GM12878 (cell line): ENCODE measurements at regions of chr12 and their contacts with region 1.

Region 1: GRCh38 chr12:64610149-64610678 is at the start of gene RASSF3:
- DNase-seq: no peak
- ATAC-seq: peak; percentile 54
- H3K4me3 ChIP-seq: peak within 1 kb of the TSS; percentile 99
- H3K27ac ChIP-seq: peak within 1 kb of the TSS; percentile 83
- H3K4me1 ChIP-seq: peaks cover 17% of the 10 kb centered on the region; the same call in 1 of the 2 replicates
- H3K27me3 ChIP-seq: no peaks in the 10 kb centered on the region
- CTCF ChIP-seq: no peak
- EP300 ChIP-seq: no peak
- POLR2A ChIP-seq: peak; percentile 74
- RAD21 ChIP-seq: no peak
- polyA plus RNA-seq, gene RASSF3: 9.0 to 11.2 TPM

Region 2: DNA sequence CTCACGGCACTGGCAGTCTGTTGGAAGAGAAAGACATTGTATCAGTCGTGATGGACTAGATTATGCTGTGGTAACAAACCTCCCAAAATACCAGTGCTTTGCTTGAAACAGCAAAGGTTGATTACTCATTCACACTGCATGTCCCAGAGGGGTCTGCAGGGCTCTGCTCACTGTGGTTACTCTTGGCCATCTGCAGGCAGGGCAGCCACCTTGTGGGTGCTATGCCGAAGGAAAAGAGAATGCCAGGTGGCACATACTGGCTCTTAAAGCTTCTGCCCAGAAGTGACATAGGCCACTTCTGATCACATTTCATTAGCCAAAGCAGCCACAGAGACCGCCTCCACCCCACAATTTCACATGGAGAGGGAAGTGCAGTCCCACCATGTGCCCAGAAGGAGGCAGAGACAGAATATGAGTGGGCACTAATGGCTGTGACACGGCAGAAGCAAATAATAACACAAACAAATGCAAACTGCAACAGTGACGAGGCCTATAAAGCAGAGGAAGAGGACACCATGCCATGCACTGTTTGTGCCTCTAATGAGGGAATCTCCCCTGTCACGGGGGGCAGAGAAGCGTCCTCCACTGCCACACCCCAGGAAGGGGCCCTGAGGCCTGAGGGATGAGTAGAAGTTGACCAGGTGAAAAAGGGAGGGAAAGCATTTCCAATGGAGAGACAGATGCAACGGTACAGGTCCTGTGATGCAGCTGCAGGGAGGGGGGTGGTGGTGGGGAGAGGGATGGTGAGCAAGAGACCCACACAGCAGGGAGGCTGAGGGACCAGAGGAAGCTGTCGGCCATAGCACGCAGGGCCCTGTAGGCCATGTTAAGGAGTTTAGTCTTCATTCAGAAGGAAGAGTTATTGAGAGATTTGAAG is 336.4 kb before region 1 on chr12:
- CTCF ChIA-PET with region 1: no interaction called
- POLR2A ChIA-PET with region 1: no interaction called
- RAD21 ChIA-PET with region 1: no interaction called
- SMC1A ChIA-PET with region 1: no interaction called
- in situ Hi-C with region 1: no loop called
- intact Hi-C with region 1: no loop called
- DNase-seq: no peak
- ATAC-seq: peak; percentile 91
- H3K4me3 ChIP-seq: no peak overlapping the region
- H3K27ac ChIP-seq: no peak overlapping the region
- H3K4me1 ChIP-seq: no peaks in the 10 kb centered on the region
- H3K27me3 ChIP-seq: no peaks in the 10 kb centered on the region; a peak in 1 of 4 replicates
- CTCF ChIP-seq: peak; percentile 36 to 64 (median 51); a peak in 4 of 6 replicates
- EP300 ChIP-seq: no peak
- POLR2A ChIP-seq: no peak
- RAD21 ChIP-seq: peak; percentile 79

Region 3: GRCh38 chr12:64551698-64552097 is 58.5 kb before region 1 on chr12:
- CTCF ChIA-PET with region 1: interaction called, 26 read pairs
- POLR2A ChIA-PET with region 1: interaction called, 4 read pairs
- RAD21 ChIA-PET with region 1: interaction called, 9 read pairs
- SMC1A ChIA-PET with region 1: interaction called, 8 read pairs
- in situ Hi-C with region 1: no loop called
- intact Hi-C with region 1: loop called (anchors 2 kb)
- DNase-seq: no peak
- ATAC-seq: no peak
- H3K4me3 ChIP-seq: no peak overlapping the region
- H3K27ac ChIP-seq: no peak overlapping the region
- H3K4me1 ChIP-seq: no peaks in the 10 kb centered on the region; the same call in 1 of the 2 replicates
- H3K27me3 ChIP-seq: no peaks in the 10 kb centered on the region; a peak in 1 of 4 replicates
- CTCF ChIP-seq: no peak
- EP300 ChIP-seq: no peak
- POLR2A ChIP-seq: no peak
- RAD21 ChIP-seq: no peak

Region 4: GRCh38 chr12:64669270-64669842 is 59.1 kb after region 1 on chr12:
- CTCF ChIA-PET with region 1: interaction called, 7 read pairs
- POLR2A ChIA-PET with region 1: interaction called, 27 read pairs
- RAD21 ChIA-PET with region 1: interaction called, 19 read pairs
- SMC1A ChIA-PET with region 1: interaction called, 38 read pairs
- in situ Hi-C with region 1: no loop called
- intact Hi-C with region 1: loop called (anchors 5 kb)
- DNase-seq: peak; percentile 73
- ATAC-seq: peak; percentile 82
- H3K4me3 ChIP-seq: peak overlapping the region; percentile 74
- H3K27ac ChIP-seq: peak overlapping the region; percentile 91
- H3K4me1 ChIP-seq: peaks cover 77% of the 10 kb centered on the region
- H3K27me3 ChIP-seq: no peaks in the 10 kb centered on the region
- CTCF ChIP-seq: no peak
- EP300 ChIP-seq: no peak
- POLR2A ChIP-seq: peak; percentile 31; the same call in 1 of the 2 replicates
- RAD21 ChIP-seq: no peak

Region 5: GRCh38 chr12:64696080-64696741 is 86.0 kb after region 1 on chr12:
- CTCF ChIA-PET with region 1: interaction called, 37 read pairs
- POLR2A ChIA-PET with region 1: interaction called, 12 read pairs
- RAD21 ChIA-PET with region 1: interaction called, 27 read pairs
- SMC1A ChIA-PET with region 1: interaction called, 13 read pairs
- in situ Hi-C with region 1: no loop called
- intact Hi-C with region 1: loop called (anchors 2 kb)
- DNase-seq: no peak
- ATAC-seq: no peak
- H3K4me3 ChIP-seq: no peak overlapping the region
- H3K27ac ChIP-seq: no peak overlapping the region
- H3K4me1 ChIP-seq: 0 out of 2 replicates have a peak, but pooled peaks cover 3% of the 10 kb centered on the region
- H3K27me3 ChIP-seq: no peaks in the 10 kb centered on the region
- CTCF ChIP-seq: peak in 1 of 3 experiments; percentile 40; a peak in 2 of 6 replicates
- EP300 ChIP-seq: no peak
- POLR2A ChIP-seq: no peak
- RAD21 ChIP-seq: peak; percentile 45

Region 6: DNA sequence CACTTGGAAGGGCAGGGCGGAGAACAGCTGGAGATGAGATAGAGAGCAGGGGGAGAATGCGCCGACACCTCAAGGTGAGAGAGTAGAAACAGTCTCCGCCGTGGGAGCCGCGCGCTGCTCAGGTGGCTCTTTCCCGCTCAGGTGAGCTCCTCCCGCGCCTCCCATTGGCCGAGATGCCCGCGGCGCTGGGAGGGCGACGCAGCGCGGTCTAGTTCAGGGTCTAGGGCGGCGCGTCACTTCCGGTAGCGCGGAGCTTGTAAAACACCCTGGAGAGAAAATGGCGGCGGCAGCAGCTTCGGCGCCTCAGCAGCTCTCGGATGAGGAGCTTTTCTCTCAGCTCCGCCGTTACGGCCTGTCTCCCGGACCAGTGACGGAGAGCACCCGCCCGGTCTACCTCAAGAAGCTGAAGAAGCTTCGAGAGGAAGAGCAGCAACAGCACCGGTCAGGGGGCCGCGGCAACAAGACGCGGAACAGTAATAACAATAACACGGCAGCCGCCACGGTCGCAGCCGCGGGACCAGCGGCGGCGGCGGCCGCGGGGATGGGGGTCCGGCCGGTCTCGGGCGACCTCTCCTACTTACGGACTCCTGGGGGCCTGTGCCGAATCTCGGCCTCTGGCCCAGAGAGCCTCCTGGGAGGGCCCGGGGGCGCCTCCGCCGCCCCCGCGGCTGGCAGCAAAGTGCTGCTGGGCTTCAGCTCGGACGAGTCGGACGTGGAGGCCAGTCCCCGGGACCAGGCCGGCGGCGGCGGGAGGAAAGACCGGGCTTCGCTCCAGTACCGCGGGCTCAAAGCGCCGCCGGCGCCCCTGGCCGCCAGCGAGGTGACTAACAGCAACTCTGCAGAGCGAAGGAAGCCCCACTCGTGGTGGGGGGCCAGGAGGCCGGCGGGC is 559.4 kb after region 1 on chr12 and contains the start of gene LEMD3:
- CTCF ChIA-PET with region 1: no interaction called
- POLR2A ChIA-PET with region 1: interaction called, 4 read pairs
- RAD21 ChIA-PET with region 1: no interaction called
- SMC1A ChIA-PET with region 1: no interaction called
- in situ Hi-C with region 1: no loop called
- intact Hi-C with region 1: loop called (anchors 10 kb)
- DNase-seq: peak; percentile 59
- ATAC-seq: peak; percentile 90
- H3K4me3 ChIP-seq: peak within 1 kb of the TSS; percentile 86
- H3K27ac ChIP-seq: peak within 1 kb of the TSS; percentile 83
- H3K4me1 ChIP-seq: peaks cover 5% of the 10 kb centered on the region
- H3K27me3 ChIP-seq: no peaks in the 10 kb centered on the region
- CTCF ChIP-seq: no peak
- EP300 ChIP-seq: peak in 1 of 2 experiments; percentile 16; a peak in 1 of 4 replicates
- POLR2A ChIP-seq: peak; percentile 99
- RAD21 ChIP-seq: no peak
- polyA plus RNA-seq, gene LEMD3: 7.5 to 9.0 TPM